HEK293 (cell line): ENCODE measurements at regions of chr6 and their contacts with region 1.

Region 1: GRCh38 chr6:125956506-125957390 is at the start of gene HINT3:
- H3K4me3 ChIP-seq: peak within 1 kb of the TSS; percentile 83
- H3K27ac ChIP-seq: peak within 1 kb of the TSS; percentile 94
- H3K4me1 ChIP-seq: no peaks in the 10 kb centered on the region
- CTCF ChIP-seq: peak; percentile 100

Region 2: DNA sequence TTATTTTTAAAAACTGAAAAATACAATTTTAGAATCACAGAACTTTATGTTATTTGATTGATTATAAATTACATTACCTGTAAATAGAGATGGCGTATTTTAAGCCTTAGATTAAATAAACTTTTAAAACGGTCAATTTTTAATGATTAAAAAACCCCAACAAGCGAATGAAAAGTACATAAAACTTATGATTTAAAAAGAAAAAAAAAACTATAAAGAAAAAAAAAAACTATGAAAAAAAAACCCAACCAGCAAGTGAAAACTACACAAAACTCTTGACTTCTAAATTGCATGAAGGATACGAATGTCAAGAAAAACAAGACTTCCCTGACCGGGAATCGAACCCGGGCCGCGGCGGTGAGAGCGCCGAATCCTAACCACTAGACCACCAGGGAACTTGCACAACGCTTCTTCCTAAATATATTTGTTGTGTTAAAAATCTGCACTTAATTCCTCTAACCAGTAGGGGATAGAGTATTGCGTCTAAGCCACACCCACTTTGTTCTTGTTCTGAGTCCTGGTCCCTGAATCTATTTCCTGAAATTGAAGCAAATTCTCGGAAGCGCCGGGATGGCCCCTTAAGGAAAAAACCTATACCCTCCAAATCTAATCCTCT is 176.7 kb before region 1 on chr6:
- CTCF ChIA-PET with region 1: interaction called, 44 read pairs
- POLR2A ChIA-PET with region 1: interaction called, 17 read pairs
- H3K4me3 ChIP-seq: peak overlapping the region; percentile 85
- H3K27ac ChIP-seq: peak overlapping the region; percentile 83
- H3K4me1 ChIP-seq: no peaks in the 10 kb centered on the region
- CTCF ChIP-seq: peak; percentile 55; the same call in 1 of the 2 replicates

Region 3: GRCh38 chr6:125867483-125867935 is 89.2 kb before region 1 on chr6:
- CTCF ChIA-PET with region 1: interaction called, 14 read pairs
- POLR2A ChIA-PET with region 1: interaction called, 11 read pairs
- H3K4me3 ChIP-seq: no peak overlapping the region
- H3K27ac ChIP-seq: no peak overlapping the region
- H3K4me1 ChIP-seq: peaks cover 10% of the 10 kb centered on the region; the same call in 1 of the 2 replicates
- CTCF ChIP-seq: no peak

Region 4: GRCh38 chr6:125906158-125906998 is 50.4 kb before region 1 on chr6:
- CTCF ChIA-PET with region 1: interaction called, 14 read pairs
- POLR2A ChIA-PET with region 1: no interaction called
- H3K4me3 ChIP-seq: no peak overlapping the region
- H3K27ac ChIP-seq: no peak overlapping the region
- H3K4me1 ChIP-seq: no peaks in the 10 kb centered on the region
- CTCF ChIP-seq: peak; percentile 79

Region 5: GRCh38 chr6:125944434-125944816 is 12.3 kb before region 1 on chr6:
- CTCF ChIA-PET with region 1: interaction called, 54 read pairs
- POLR2A ChIA-PET with region 1: interaction called, 36 read pairs
- H3K4me3 ChIP-seq: no peak overlapping the region
- H3K27ac ChIP-seq: no peak overlapping the region
- H3K4me1 ChIP-seq: peaks cover 10% of the 10 kb centered on the region
- CTCF ChIP-seq: no peak

Region 6: DNA sequence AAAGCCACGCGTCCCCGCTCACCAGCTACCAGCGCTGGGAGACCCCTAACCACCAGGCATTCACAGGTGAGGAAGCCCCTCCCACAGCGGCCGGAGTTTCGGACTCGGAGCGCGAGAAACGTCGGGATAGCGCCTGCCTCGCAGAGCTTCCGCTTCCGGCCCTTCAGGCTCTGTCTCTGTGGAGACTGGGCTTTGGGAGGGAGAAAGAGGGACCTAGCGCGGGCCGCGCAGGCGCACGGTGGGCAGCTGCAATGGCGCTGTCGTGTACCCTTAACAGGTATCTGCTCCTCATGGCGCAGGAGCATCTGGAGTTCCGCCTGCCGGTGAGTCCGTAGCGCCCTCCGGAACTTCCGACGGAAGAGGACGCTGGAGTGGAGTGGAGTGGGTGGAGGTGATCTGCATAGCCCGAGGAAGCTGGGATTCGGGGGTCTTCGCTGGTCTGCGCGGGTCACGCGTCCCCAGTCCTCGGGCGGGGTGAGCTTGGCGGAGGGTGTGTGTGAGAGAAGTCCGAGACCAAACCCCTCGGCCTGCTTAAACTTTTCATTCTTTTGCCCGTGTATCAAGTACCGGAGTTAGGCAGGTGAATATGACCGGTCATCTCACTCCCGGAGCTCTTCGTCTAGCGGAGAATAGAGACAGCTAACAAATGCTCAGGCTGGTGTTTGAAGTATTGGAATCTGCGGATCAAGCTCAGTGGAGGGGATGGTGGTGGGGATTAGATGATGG is 29.7 kb after region 1 on chr6 and contains the start of gene TRMT11:
- CTCF ChIA-PET with region 1: interaction called, 6 read pairs
- POLR2A ChIA-PET with region 1: interaction called, 20 read pairs
- H3K4me3 ChIP-seq: peak within 1 kb of the TSS; percentile 81
- H3K27ac ChIP-seq: peak within 1 kb of the TSS; percentile 63
- H3K4me1 ChIP-seq: peaks cover 5% of the 10 kb centered on the region
- CTCF ChIP-seq: peak; percentile 89